GM12878 (cell line): ENCODE measurements at regions of chr13 and their contacts with region 1.

Region 1: DNA sequence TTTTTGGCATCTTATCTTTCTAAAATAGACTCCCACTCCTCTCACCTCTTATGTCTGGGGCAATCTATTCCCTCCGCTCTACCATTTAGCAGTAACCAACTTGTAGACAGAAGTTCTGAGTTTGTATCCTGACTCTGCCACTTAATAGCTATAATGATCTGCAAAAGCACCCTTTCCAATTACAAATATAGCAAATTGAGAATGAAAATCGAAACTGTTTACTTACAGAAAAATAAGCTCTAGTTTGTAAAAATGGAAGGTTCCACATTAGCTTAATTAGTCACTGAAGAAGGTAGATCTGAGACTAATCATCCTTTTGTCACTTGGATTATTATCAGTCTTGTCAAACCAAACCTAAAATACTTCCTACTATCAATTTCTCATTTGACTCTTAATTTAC is 409.3 kb downstream of the DIAPH3 start:
- DNase-seq: no peak
- ATAC-seq: peak; percentile 64
- H3K4me3 ChIP-seq: no peak overlapping the region
- H3K27ac ChIP-seq: no peak overlapping the region
- H3K4me1 ChIP-seq: peaks cover 4% of the 10 kb centered on the region; the same call in 1 of the 2 replicates
- H3K27me3 ChIP-seq: no peaks in the 10 kb centered on the region
- CTCF ChIP-seq: no peak
- EP300 ChIP-seq: no peak
- POLR2A ChIP-seq: no peak
- RAD21 ChIP-seq: no peak

Region 2: DNA sequence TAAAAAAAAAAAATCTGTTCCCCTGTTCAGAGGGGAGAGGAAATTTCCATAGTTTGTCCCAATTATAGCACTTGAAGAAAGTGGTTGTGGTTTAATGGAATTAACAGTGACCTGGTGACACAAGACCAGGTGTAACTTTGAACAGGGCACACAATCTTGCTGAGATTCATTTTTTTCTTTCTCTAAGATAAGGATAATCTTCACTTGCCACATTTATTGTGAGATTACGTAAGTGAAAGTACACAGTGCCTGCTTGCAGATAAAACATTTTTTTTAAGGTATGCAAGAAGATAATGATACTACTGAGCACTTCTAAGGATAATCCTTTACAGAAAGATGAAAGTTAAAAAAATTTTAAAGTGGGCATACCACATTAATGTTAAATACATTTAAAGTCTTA is 38.8 kb before region 1 on chr13:
- CTCF ChIA-PET with region 1: no interaction called
- POLR2A ChIA-PET with region 1: no interaction called
- RAD21 ChIA-PET with region 1: no interaction called
- SMC1A ChIA-PET with region 1: no interaction called
- in situ Hi-C with region 1: no loop called
- intact Hi-C with region 1: no loop called
- DNase-seq: no peak
- ATAC-seq: no peak
- H3K4me3 ChIP-seq: no peak overlapping the region
- H3K27ac ChIP-seq: no peak overlapping the region
- H3K4me1 ChIP-seq: no peaks in the 10 kb centered on the region
- H3K27me3 ChIP-seq: no peaks in the 10 kb centered on the region
- CTCF ChIP-seq: no peak
- EP300 ChIP-seq: no peak
- POLR2A ChIP-seq: no peak
- RAD21 ChIP-seq: no peak

Region 3: DNA sequence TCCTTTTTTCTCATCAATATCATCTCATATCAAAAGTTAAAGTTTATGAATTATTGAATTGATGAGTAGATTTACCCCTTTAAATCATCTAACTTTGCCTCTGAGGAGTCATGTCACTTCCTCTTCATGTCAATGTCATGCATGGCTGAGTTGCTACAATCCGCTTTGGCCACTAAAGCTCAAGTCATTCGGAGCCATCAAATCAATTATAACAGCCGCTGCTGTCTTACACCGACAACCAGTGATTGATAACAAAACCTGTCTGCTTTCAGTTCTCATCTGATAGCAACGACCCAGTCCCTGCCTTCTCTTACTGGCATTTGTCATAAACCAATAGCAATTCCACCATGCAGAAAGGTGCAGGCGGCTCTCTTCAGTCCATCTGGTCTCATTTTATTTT is 20.0 kb before region 1 on chr13:
- CTCF ChIA-PET with region 1: interaction called, 3 read pairs
- POLR2A ChIA-PET with region 1: no interaction called
- RAD21 ChIA-PET with region 1: interaction called, 4 read pairs
- SMC1A ChIA-PET with region 1: interaction called, 10 read pairs
- in situ Hi-C with region 1: no loop called
- intact Hi-C with region 1: no loop called
- DNase-seq: peak; percentile 93
- ATAC-seq: peak; percentile 100
- H3K4me3 ChIP-seq: peak overlapping the region; percentile 20; the same call in 1 of the 2 replicates
- H3K27ac ChIP-seq: peak overlapping the region; percentile 10
- H3K4me1 ChIP-seq: peaks cover 6% of the 10 kb centered on the region; the same call in 1 of the 2 replicates
- H3K27me3 ChIP-seq: no peaks in the 10 kb centered on the region
- CTCF ChIP-seq: no peak
- EP300 ChIP-seq: peak; percentile 74 to 91; a peak in 3 of 4 replicates
- POLR2A ChIP-seq: no peak
- RAD21 ChIP-seq: 0 out of 2 replicates have a peak, but pooled peaks have one; percentile 12